ENCODE measurements at regions of chr1 and their contacts with region 1.

Region 1: GRCh38 chr1:241551759-241552638 is 19.8 kb downstream of the KMO start:
- DNase-seq: peak; percentile 25 to 72 (median 61)
- ATAC-seq: peak; percentile 91
- H3K4me3 ChIP-seq: peak overlapping the region; percentile 49
- H3K4me3 Mint-ChIP-seq: peak overlapping the region; percentile 83 to 93 (median 88)
- H3K27ac ChIP-seq: peak overlapping the region; percentile 55
- H3K27ac Mint-ChIP-seq: peak overlapping the region; percentile 93 to 98 (median 96)
- H3K4me1 ChIP-seq: peaks cover 0 to 14% of the 10 kb centered on the region in 2 donors
- H3K4me1 Mint-ChIP-seq: peaks cover 14 to 36% (median 25%) of the 10 kb centered on the region in 7 donors
- H3K27me3 ChIP-seq: no peaks in the 10 kb centered on the region
- H3K27me3 Mint-ChIP-seq: peaks cover 0 to 5% (median 0%) of the 10 kb centered on the region in 5 donors

Region 2: GRCh38 chr1:241519308-241520079 is 32.5 kb before region 1 on chr1 and contains the start of gene FH:
- CTCF ChIA-PET with region 1: no interaction called
- POLR2A ChIA-PET with region 1: interaction called, 7 read pairs
- intact Hi-C with region 1: loop called (anchors 1 to 2 kb)
- DNase-seq: peak; percentile 83 to 96 (median 94)
- ATAC-seq: peak; percentile 99
- H3K4me3 ChIP-seq: peak within 1 kb of the TSS; percentile 66
- H3K4me3 Mint-ChIP-seq: peak within 1 kb of the TSS in 8 of 10 donors; percentile 85 to 96 (median 92)
- H3K27ac ChIP-seq: peak within 1 kb of the TSS; percentile 82
- H3K27ac Mint-ChIP-seq: peak within 1 kb of the TSS; percentile 56 to 92 (median 82)
- H3K4me1 ChIP-seq: peaks cover 5 to 6% of the 10 kb centered on the region in 2 donors
- H3K4me1 Mint-ChIP-seq: peaks cover 2 to 46% (median 38%) of the 10 kb centered on the region in 7 donors
- H3K27me3 ChIP-seq: no peaks in the 10 kb centered on the region
- H3K27me3 Mint-ChIP-seq: peaks cover 15 to 28% (median 26%) of the 10 kb centered on the region in 5 donors
- total RNA-seq, gene FH: 17.3 to 57.9 (median 21.8) TPM

Region 3: DNA sequence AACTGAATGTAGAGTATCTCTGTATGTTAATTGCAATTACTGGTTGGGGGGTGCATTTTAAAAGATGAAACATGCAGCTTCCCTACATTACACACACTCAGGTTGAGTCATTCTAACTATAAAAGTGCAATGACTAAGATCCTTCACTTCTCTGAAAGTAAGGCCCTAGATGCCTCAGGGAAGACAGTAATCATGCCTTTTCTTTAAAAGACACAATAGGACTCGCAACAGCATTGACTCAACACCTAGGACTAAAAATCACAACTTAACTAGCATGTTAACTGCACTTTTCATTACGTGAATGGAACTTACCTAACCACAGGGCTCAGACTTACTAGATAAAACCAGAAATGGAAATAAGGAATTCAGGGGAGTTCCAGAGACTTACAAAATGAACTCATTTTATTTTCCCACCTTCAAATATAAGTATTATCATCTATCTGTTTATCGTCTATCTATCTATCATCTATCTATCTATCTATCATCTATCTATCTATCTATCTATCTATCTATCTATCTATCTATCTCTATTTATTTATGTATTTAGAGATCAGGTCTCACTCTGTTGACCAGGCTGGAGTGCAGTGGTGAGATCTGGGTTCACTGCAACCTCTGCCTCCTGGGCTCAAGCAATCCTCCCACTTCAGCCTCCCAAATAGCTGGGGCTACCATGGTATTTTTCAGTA is 40.4 kb after region 1 on chr1:
- CTCF ChIA-PET with region 1: no interaction called
- POLR2A ChIA-PET with region 1: no interaction called
- intact Hi-C with region 1: no loop called
- DNase-seq: no peak
- ATAC-seq: peak; percentile 81
- H3K4me3 ChIP-seq: no peak overlapping the region
- H3K4me3 Mint-ChIP-seq: no peak overlapping the region
- H3K27ac ChIP-seq: no peak overlapping the region
- H3K27ac Mint-ChIP-seq: no peak overlapping the region
- H3K4me1 ChIP-seq: no peaks in the 10 kb centered on the region
- H3K4me1 Mint-ChIP-seq: peaks cover 0 to 10% (median 0%) of the 10 kb centered on the region in 7 donors
- H3K27me3 ChIP-seq: no peaks in the 10 kb centered on the region
- H3K27me3 Mint-ChIP-seq: no peaks in the 10 kb centered on the region